ENCODE measurements at regions of chr1 and their contacts with region 1.

Region 1: DNA sequence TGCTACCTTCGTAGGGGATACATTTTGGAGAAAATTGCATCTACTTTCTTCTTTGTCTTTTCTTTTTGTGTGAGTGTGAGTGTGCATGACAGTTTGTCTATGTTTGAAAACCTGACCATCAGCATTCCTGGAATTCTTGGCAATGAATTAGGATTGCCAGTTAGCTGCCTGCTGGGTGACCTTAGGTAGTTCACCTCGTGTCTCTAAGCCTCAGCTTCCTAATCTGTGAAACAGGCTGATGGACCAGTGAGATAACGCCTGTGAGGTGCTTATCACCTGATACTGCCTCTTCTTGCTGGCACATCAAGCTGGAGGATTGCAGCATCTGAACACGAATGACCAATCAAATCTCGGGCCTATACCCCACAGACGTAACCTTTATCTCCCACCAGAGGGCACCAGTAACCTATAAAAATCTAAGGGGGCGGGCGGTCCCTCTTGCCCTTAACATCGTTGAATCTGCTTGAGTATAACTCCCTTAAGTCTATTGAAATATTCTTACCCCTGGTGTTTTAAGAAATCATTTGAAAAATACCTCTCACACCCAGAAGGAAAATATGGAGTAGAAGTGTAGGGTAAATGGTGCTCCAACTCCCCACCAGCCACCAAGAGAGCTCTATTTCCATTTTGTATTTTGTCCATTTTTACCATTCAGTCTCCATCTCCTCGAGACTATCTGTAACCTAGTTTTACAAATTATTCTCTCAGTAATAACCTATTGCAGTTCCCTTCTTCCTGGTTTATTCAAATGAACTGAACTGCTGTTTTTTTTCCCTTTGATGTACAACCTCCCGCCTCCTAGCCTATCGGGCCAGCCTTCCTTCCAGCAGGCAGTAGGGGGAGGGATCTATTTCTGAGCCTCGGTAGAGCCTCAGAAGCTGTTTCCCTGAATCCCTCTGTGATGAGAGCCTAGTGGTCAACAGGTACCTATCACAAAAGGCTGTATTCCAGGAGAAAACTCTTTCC is 49.7 kb downstream of the MDM4 start:
- DNase-seq: peak; percentile 90

Region 2: DNA sequence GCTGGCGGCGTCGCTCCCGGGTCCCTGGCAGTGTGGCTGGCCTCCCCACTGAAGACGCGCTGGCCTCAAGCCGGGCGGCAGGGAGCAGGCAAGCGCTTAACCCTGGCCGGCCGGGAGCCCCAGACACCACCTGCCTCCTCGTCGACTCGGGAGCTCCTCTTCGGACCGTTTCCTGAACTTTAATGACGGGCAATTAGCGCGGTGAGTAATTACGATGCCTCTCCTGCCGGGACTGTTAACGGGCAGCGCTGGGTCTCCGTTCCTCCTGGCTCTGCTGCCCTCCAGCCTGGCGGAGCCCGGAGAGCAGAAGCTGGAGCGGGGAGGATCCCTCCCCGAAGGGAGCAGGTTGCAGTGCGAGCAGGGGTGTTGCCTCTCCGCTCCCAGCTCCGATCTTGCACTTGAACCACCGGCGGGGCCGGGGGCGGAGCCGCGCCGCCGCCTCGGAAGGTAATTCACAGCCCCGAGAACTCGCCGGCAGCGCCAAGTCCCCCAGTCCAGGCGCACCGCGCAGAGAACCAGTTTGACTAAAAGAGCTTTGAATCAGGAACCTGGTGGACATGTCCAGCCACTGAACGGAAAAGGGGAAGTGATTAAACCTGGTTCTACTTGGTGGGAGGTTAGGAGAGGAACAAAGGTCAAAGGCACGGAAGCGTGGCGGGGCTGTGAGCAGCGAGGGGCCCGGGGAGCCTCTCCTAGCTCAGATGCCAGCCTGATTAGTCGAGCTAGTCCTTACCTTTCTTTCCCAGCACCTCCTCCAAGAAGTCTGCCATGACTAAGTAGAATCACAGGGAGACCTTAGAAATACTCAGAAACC is 187.9 kb before region 1 on chr1:
- CTCF ChIA-PET with region 1: no interaction called
- POLR2A ChIA-PET with region 1: no interaction called
- DNase-seq: peak; percentile 67

Region 3: DNA sequence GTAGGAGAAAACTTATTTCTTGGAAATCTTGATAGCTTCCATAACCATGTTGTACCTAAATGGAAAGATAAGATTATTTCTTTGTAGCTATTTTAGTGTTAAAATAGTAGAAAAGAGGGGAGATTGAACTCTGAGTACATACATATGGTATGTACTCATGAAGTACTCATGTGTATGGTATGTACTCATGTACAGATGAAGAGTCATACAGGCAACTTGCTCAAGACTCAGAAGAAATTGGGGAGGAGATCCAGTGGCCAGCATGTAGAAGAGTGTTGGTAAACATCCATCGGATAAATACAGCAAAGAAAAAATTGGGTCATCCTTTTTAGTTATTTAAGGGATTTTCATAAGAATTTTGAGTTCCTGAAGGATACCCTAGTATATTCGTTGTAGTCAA is 20.7 kb before region 1 on chr1:
- CTCF ChIA-PET with region 1: no interaction called
- POLR2A ChIA-PET with region 1: no interaction called
- DNase-seq: no peak

Region 4: DNA sequence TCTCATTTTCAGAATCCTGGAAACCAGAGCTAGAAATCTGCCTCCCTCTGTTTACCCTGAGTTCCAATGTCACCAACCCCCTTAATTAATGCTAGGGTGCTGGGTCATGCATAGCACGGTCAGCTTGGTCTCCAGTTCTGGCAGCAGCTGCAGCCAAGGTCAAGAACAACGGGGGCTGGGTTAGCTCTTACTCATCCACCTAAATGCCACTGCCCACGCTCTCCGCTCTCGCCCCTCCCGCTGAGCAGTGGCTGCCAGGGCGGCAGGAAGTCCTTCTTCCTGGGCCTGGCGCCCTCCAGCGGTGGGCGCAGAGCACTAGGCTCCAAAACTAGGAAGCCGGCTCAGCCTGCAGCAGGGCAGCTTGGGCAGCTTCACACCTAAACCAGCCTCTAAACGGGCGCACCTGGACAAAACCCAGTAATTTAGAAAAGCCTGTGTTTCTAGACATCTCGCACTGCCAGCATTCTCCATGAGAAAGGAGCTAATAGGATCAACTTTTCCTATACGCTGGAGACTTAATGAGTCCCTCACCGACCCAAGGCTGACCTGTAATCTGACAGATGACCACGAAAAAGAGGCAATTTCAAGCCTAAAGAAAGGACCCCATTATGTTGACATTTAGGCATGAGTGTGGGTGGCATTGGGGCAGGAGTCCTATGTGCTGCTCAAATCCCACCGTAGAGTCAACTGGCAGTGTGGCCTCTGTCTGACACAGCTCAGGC is 198.0 kb after region 1 on chr1:
- CTCF ChIA-PET with region 1: interaction called, 19 read pairs
- POLR2A ChIA-PET with region 1: no interaction called
- DNase-seq: peak; percentile 90

Measured in HEK293T (cell line).